PC-9 (cell line): ENCODE measurements at regions of chr4 and their contacts with region 1.

Region 1: DNA sequence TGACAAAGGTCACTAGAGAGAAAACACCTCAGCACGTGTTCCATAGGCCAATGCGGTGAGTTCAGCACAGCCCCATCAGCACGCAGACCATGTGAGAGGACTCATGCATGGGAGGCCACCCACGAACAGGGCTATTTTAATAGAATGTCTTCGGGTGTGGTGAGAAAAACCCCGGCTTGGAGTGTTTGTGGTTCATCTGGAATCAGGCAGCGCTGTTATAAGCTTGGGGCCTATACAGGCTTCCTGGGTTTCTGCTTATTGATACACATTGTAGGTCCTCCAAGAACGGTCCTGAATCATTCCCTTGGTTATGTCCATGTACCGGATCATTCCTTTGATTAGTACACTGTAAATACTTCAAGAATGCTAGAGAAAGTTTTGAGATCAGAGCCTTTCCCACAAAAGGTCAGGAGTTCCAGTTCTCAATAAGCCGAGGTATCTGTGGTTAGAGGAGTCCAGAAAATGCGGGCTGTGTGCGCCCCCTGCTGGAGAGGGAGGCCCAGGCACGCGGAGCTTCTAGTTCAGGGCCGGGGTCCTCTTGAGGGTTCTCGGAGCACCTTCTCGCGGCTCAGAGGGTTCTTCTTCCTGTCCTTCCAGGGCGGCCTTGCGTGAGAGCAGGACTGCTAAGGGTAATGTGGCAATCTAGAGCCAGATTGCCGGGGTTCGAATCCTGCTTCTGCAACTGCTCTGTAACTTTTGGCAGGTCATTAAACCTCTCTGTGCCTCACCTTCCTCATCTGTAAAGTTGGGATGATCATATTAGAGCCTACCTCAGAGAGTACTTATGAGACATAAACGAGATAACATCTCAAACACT is 51.8 kb downstream of the TLR10 start:
- DNase-seq: peak; percentile 74 to 87
- H3K4me3 ChIP-seq: no peak overlapping the region
- H3K27ac ChIP-seq: peak overlapping the region; percentile 13; the same call in 1 of the 2 replicates
- H3K4me1 ChIP-seq: peaks cover 35% of the 10 kb centered on the region
- H3K27me3 ChIP-seq: no peaks in the 10 kb centered on the region
- CTCF ChIP-seq: peak; percentile 94

Region 2: DNA sequence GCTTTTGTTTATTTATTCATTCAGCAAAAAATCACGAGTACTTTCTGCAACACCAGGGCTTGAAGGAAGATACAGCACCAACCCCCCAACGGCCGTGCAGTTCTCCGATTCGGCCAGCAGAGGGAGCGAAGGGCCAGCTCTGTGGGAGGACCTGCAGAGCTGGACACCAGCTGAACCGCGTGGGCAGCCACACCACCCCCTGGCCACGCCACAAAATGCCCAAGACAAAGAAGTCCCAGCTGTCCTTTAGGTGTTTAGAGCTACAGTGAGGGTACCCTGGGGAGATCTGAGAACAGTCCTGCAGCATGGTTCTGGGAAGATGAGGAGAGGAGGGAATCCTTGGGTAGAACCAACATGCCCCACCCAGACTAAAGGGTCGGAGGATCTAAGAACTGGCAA is 1128.0 kb before region 1 on chr4:
- CTCF ChIA-PET with region 1: no interaction called
- POLR2A ChIA-PET with region 1: no interaction called
- intact Hi-C with region 1: loop called (anchors 5 kb)
- DNase-seq: peak; percentile 46 to 73
- H3K4me3 ChIP-seq: no peak overlapping the region
- H3K27ac ChIP-seq: no peak overlapping the region
- H3K4me1 ChIP-seq: peaks cover 9% of the 10 kb centered on the region
- H3K27me3 ChIP-seq: no peaks in the 10 kb centered on the region
- CTCF ChIP-seq: peak; percentile 98

Region 3: GRCh38 chr4:38062088-38062893 is 668.7 kb before region 1 on chr4:
- CTCF ChIA-PET with region 1: interaction called, 5 read pairs
- POLR2A ChIA-PET with region 1: no interaction called
- intact Hi-C with region 1: loop called (anchors 1 kb)
- DNase-seq: peak; percentile 58 to 70
- H3K4me3 ChIP-seq: no peak overlapping the region
- H3K27ac ChIP-seq: no peak overlapping the region
- H3K4me1 ChIP-seq: peaks cover 19% of the 10 kb centered on the region
- H3K27me3 ChIP-seq: no peaks in the 10 kb centered on the region
- CTCF ChIP-seq: peak; percentile 90

Region 4: DNA sequence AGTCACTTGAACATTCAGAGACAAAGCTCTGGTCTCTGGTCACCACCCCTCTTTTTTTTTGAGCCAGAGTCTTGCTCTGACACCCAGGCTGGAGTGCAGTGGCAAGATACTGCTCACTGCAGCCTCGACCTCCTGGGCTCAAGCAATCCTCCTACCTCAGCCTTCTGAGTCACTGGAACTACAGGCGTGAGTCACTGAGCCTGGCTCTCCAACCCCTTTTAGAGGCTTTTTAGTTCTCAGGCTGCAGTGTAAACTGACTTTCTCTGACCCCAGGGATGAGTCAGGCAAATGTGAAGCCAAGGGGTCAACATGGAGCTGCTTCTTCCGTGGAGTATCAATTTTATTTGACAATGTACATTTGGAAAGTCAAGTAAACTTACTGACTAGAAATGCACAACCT is 541.6 kb before region 1 on chr4:
- CTCF ChIA-PET with region 1: no interaction called
- POLR2A ChIA-PET with region 1: no interaction called
- intact Hi-C with region 1: loop called (anchors 1 kb)
- DNase-seq: peak; percentile 56 to 94
- H3K4me3 ChIP-seq: no peak overlapping the region; the same call in 1 of the 2 replicates
- H3K27ac ChIP-seq: peak overlapping the region; percentile 99
- H3K4me1 ChIP-seq: peaks cover 37% of the 10 kb centered on the region
- H3K27me3 ChIP-seq: no peaks in the 10 kb centered on the region
- CTCF ChIP-seq: no peak

Region 5: DNA sequence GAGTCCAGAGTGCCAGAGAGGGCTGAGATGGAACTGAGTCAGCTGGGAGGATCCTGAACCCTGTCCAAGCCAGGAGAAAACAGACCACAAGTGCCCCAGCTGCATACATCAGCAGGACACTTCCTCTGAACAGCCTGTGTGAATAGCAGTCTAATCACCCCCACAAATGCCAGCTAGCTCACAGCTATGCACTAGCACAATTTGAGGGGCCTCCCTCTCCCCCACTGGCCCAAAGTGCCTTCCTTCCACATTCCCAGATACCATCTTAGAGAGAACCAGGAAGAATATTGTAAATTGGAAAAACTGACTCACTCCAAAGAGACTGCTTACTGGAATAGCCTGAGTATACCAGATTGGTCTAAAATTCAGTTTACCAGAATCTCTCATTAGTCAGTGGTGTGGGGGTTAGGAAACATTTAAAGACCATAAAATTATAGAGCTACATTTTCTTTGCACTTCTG is 359.6 kb before region 1 on chr4:
- CTCF ChIA-PET with region 1: no interaction called
- POLR2A ChIA-PET with region 1: no interaction called
- intact Hi-C with region 1: no loop called
- DNase-seq: no peak
- H3K4me3 ChIP-seq: no peak overlapping the region
- H3K27ac ChIP-seq: no peak overlapping the region
- H3K4me1 ChIP-seq: no peaks in the 10 kb centered on the region; the same call in 1 of the 2 replicates
- H3K27me3 ChIP-seq: no peaks in the 10 kb centered on the region
- CTCF ChIP-seq: no peak

Region 6: GRCh38 chr4:38663801-38664705 is 67.0 kb before region 1 on chr4 and contains the start of gene KLF3:
- CTCF ChIA-PET with region 1: interaction called, 3 read pairs
- POLR2A ChIA-PET with region 1: no interaction called
- intact Hi-C with region 1: loop called (anchors 2 kb)
- DNase-seq: peak; percentile 59 to 92
- H3K4me3 ChIP-seq: peak within 1 kb of the TSS; percentile 72
- H3K27ac ChIP-seq: peak within 1 kb of the TSS; percentile 96
- H3K4me1 ChIP-seq: peaks cover 34% of the 10 kb centered on the region
- H3K27me3 ChIP-seq: no peaks in the 10 kb centered on the region
- CTCF ChIP-seq: no peak
- total RNA-seq, gene KLF3: 33.1 and 37.5 TPM in 2 replicates